GM12878 (cell line): ENCODE measurements at regions of chr16 and their contacts with region 1.

Region 1: GRCh38 chr16:2980227-2981086 is at the start of gene PKMYT1:
- DNase-seq: peak; percentile 61
- ATAC-seq: peak; percentile 89
- H3K4me3 ChIP-seq: peak within 1 kb of the TSS; percentile 74
- H3K27ac ChIP-seq: peak within 1 kb of the TSS; percentile 88
- H3K4me1 ChIP-seq: peaks cover 7% of the 10 kb centered on the region
- H3K27me3 ChIP-seq: no peaks in the 10 kb centered on the region
- CTCF ChIP-seq: no peak
- EP300 ChIP-seq: no peak
- POLR2A ChIP-seq: peak; percentile 98
- RAD21 ChIP-seq: no peak
- polyA plus RNA-seq, gene PKMYT1: 4.6 to 20.2 TPM

Region 2: GRCh38 chr16:2968738-2969544 is 11.5 kb before region 1 on chr16 and contains the start of gene PAQR4:
- CTCF ChIA-PET with region 1: interaction called, 13 read pairs
- POLR2A ChIA-PET with region 1: interaction called, 18 read pairs
- RAD21 ChIA-PET with region 1: interaction called, 6 read pairs
- SMC1A ChIA-PET with region 1: interaction called, 5 read pairs
- in situ Hi-C with region 1: no loop called
- intact Hi-C with region 1: no loop called
- DNase-seq: peak; percentile 72
- ATAC-seq: peak; percentile 76
- H3K4me3 ChIP-seq: peak within 1 kb of the TSS; percentile 91
- H3K27ac ChIP-seq: peak within 1 kb of the TSS; percentile 78
- H3K4me1 ChIP-seq: peaks cover 26% of the 10 kb centered on the region
- H3K27me3 ChIP-seq: no peaks in the 10 kb centered on the region
- CTCF ChIP-seq: no peak
- EP300 ChIP-seq: 0 out of 4 replicates have a peak, but pooled peaks of 1 of the 2 experiments have one; percentile 7
- POLR2A ChIP-seq: 0 out of 2 replicates have a peak, but pooled peaks have one; percentile 20
- RAD21 ChIP-seq: no peak
- polyA plus RNA-seq, gene PAQR4: 0.39 to 0.84 TPM